Activated naive CD4-positive, alpha-beta T cell treated with anti-CD3 and anti-CD28 coated beads for 36 hours (primary cell): ENCODE measurements at regions of chr12 and their contacts with region 1.

Region 1: DNA sequence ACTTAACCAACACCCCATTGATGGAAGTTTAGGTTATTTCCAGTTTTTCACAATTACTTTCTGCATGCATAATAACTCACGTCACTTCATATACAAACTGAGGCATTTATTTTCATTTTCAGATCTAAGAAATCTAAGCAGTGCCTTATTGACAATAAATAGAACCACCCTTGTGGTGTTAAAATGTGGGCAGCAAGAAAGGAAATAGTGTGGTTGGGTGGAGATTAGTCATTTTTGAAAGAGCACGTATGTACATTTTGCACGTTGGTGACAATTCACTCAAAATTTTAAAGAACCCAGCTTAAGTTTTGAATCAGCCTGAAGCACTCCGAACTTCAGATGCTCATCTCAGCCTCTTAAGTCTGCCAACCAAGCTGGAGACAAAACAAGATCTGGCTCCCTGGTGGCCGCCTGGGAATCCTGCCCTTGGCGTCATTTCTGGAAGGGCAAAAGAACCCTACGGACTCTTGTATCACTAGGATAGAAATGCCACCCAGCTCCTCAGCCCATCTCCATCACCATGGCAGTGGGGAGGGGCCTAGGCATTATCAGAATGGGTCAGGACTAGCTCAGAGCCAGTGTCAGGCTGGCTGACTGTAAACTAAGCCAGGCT is 89.5 kb upstream of the BCL2L14 start:
- DNase-seq: peak; percentile 72
- H3K4me3 Mint-ChIP-seq: no peak overlapping the region
- H3K27ac Mint-ChIP-seq: peak overlapping the region; percentile 98
- H3K4me1 Mint-ChIP-seq: peaks cover 51% of the 10 kb centered on the region
- H3K27me3 Mint-ChIP-seq: no peaks in the 10 kb centered on the region

Region 2: GRCh38 chr12:11702959-11703358 is 278.3 kb before region 1 on chr12:
- CTCF ChIA-PET with region 1: no interaction called
- intact Hi-C with region 1: loop called (anchors 1 kb)
- DNase-seq: peak; percentile 14
- H3K4me3 Mint-ChIP-seq: no peak overlapping the region
- H3K27ac Mint-ChIP-seq: peak overlapping the region; percentile 76
- H3K4me1 Mint-ChIP-seq: peaks cover 49% of the 10 kb centered on the region
- H3K27me3 Mint-ChIP-seq: no peaks in the 10 kb centered on the region

Region 3: DNA sequence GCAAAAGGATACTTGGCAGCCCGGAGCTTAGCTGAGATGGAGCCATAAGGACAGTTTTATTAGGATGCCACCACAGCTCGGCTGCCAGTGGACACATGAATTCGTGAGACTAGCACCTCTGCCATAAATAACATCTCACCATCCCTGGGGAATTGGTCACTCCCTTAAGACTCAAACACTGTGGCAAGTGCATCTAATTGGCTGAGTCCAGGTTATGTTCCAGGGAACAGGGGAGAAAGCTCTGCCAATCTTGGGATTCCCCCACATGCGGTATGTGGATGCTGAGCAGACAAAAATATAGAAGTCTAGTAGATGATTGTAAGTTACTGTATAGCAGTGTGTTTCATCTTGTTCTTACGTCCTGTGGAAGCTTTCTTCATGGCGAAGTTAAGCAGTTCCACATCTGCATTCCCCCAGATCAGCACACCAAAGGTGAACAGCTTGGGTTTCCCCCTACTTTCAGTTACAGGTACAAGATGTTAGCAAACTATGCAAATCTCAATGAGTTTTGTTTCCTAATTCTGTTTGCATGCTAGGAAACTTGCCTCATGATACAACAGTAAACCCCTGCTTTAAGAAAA is 200.6 kb before region 1 on chr12:
- CTCF ChIA-PET with region 1: interaction called, 3 read pairs
- intact Hi-C with region 1: loop called (anchors 1 kb)
- DNase-seq: peak; percentile 68
- H3K4me3 Mint-ChIP-seq: peak overlapping the region; percentile 2
- H3K27ac Mint-ChIP-seq: peak overlapping the region; percentile 85
- H3K4me1 Mint-ChIP-seq: peaks cover 74% of the 10 kb centered on the region
- H3K27me3 Mint-ChIP-seq: no peaks in the 10 kb centered on the region

Region 4: GRCh38 chr12:11877869-11878780 is 103.1 kb before region 1 on chr12:
- CTCF ChIA-PET with region 1: no interaction called
- intact Hi-C with region 1: loop called (anchors 1 kb)
- DNase-seq: peak; percentile 26
- H3K4me3 Mint-ChIP-seq: no peak overlapping the region
- H3K27ac Mint-ChIP-seq: no peak overlapping the region
- H3K4me1 Mint-ChIP-seq: peaks cover 47% of the 10 kb centered on the region
- H3K27me3 Mint-ChIP-seq: no peaks in the 10 kb centered on the region

Region 5: GRCh38 chr12:11958221-11959091 is 22.8 kb before region 1 on chr12:
- CTCF ChIA-PET with region 1: interaction called, 3 read pairs
- intact Hi-C with region 1: loop called (anchors 1 kb)
- DNase-seq: peak; percentile 84
- H3K4me3 Mint-ChIP-seq: peak overlapping the region; percentile 32
- H3K27ac Mint-ChIP-seq: peak overlapping the region; percentile 73
- H3K4me1 Mint-ChIP-seq: peaks cover 32% of the 10 kb centered on the region
- H3K27me3 Mint-ChIP-seq: peaks cover 11% of the 10 kb centered on the region

Region 6: DNA sequence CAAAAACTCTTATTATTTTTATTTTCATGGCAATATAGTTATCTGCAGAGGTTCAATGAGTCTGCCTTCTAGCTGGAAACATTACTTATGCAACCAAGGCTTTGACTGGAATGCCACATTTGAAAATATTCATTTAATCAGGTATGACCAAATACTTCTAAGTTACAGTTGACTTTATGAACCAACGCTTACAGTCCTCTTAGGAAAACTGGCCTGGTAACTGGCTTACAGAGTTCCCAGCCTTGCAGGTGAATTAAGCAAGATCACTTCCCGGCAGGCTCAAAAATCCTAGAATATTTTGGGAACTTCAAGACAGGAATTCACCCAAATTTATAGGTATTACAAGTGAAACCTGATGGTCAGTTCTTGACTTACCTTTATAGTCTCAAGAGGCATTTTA is 273.3 kb after region 1 on chr12:
- CTCF ChIA-PET with region 1: no interaction called
- intact Hi-C with region 1: no loop called
- DNase-seq: no peak
- H3K4me3 Mint-ChIP-seq: no peak overlapping the region
- H3K27ac Mint-ChIP-seq: no peak overlapping the region
- H3K4me1 Mint-ChIP-seq: peaks cover 8% of the 10 kb centered on the region
- H3K27me3 Mint-ChIP-seq: no peaks in the 10 kb centered on the region